ENCODE measurements at regions of chr10 and their contacts with region 1.

Region 1: DNA sequence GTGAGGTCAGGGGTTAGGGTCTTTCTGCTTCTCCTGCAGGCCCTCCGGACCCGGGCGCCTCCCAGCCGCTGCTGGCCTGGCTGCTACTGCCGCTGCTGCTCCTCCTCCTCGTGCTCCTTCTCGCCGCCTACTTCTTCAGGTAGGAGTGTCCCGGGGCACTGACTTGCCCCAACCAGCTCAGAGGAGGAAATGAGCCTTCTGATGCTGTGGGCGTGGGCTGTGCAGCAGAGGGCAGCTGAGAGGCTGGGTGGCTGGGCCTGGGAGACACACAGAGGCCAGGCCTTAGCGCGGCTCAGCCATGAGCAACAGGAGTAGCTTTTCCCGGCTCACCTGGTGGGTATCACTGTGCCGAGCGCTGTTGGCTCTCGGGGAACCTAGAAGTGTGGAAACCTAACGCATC is 78.9 kb downstream of the MKI67 start:
- DNase-seq: peak; percentile 89
- H3K4me3 Mint-ChIP-seq: peak overlapping the region; percentile 93
- H3K27ac Mint-ChIP-seq: peak overlapping the region; percentile 100
- H3K4me1 Mint-ChIP-seq: peaks cover 63% of the 10 kb centered on the region
- H3K27me3 Mint-ChIP-seq: no peaks in the 10 kb centered on the region

Region 2: DNA sequence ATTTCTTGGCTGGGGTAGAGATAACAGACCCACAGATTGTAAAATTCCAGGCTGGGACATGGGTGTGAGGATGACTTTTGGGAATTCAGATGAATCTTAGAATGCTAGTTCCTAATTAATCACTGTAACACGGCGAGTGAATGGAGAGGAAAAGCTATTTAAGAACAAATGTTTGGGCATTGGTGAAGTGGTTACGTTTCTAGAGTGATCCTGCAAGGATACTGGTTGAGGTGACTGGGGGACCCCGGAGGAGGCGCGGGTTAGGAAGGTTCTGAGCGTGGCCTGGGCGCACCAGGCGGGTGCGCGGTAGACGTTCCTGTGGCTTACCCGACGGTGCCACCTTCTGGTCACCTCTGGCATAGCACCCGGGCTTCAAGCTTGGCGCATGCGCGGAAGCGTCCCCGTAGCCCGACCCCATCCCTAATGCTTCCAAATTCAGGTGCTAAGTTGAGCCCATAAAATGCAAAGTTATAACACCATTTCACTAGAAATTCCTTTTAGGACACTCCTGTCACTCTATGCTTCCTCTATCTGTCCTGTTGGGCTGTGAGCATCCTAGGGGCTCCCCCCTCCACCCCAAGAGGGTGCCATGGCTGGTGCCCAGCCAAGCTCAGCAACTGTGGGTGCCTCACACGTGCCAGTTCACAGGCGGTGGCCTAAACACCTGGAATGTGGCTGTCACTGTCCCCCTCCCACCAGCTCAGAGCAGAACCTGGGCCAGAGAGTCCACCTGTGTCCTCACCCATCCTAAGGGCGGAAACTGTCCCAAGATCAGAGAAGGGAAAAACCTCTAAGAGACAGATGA is 36.0 kb before region 1 on chr10:
- CTCF ChIA-PET with region 1: interaction called, 14 read pairs
- POLR2A ChIA-PET with region 1: interaction called, 4 read pairs
- DNase-seq: peak; percentile 87
- H3K4me3 Mint-ChIP-seq: no peak overlapping the region
- H3K27ac Mint-ChIP-seq: no peak overlapping the region
- H3K4me1 Mint-ChIP-seq: peaks cover 12% of the 10 kb centered on the region
- H3K27me3 Mint-ChIP-seq: peaks cover 28% of the 10 kb centered on the region

Region 3: DNA sequence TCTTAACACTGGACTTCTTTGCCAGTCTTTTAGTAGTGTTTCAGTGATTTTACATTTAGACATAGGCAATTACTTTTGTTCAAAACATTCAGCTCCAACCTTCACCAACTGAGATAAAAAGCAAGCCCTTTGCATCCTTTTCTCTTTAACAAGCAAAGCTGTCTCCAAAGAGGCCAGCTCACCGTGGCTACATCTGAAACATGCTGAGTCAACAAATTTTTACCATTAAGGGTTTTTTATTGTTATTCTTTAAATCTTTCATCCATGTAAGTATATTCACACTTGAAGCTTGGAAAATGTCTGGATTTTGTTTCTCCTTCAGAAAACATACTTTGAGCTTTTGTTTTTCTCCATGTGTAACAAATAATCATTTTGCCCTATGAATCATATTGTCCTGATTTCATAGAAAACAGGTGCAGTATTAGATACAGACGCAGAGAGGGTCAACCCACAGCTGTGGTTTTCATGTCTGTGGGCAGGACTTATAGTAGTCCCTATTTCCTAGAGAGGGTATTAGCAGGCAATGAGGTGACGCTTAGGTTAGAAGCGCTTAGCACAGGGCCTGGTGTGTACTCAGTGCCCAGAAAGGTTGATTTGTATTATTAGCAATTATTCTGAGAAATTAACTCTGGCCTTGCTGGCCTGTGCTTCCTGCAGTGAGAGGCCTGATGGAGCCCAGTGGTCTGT is 20.6 kb before region 1 on chr10:
- CTCF ChIA-PET with region 1: interaction called, 7 read pairs
- POLR2A ChIA-PET with region 1: interaction called, 11 read pairs
- DNase-seq: peak; percentile 35
- H3K4me3 Mint-ChIP-seq: no peak overlapping the region
- H3K27ac Mint-ChIP-seq: no peak overlapping the region
- H3K4me1 Mint-ChIP-seq: peaks cover 19% of the 10 kb centered on the region
- H3K27me3 Mint-ChIP-seq: no peaks in the 10 kb centered on the region

Region 4: GRCh38 chr10:128035557-128035973 is 11.8 kb before region 1 on chr10:
- CTCF ChIA-PET with region 1: interaction called, 54 read pairs
- POLR2A ChIA-PET with region 1: interaction called, 16 read pairs
- DNase-seq: peak; percentile 71
- H3K4me3 Mint-ChIP-seq: no peak overlapping the region
- H3K27ac Mint-ChIP-seq: no peak overlapping the region
- H3K4me1 Mint-ChIP-seq: peaks cover 3% of the 10 kb centered on the region
- H3K27me3 Mint-ChIP-seq: peaks cover 2% of the 10 kb centered on the region

Region 5: GRCh38 chr10:128064108-128064969 is 17.0 kb after region 1 on chr10:
- CTCF ChIA-PET with region 1: interaction called, 36 read pairs
- POLR2A ChIA-PET with region 1: interaction called, 167 read pairs
- DNase-seq: peak; percentile 76
- H3K4me3 Mint-ChIP-seq: peak overlapping the region; percentile 51
- H3K27ac Mint-ChIP-seq: peak overlapping the region; percentile 76
- H3K4me1 Mint-ChIP-seq: peaks cover 66% of the 10 kb centered on the region
- H3K27me3 Mint-ChIP-seq: no peaks in the 10 kb centered on the region

Region 6: GRCh38 chr10:128069351-128070051 is 22.1 kb after region 1 on chr10:
- CTCF ChIA-PET with region 1: interaction called, 36 read pairs
- POLR2A ChIA-PET with region 1: interaction called, 167 read pairs
- DNase-seq: peak; percentile 82
- H3K4me3 Mint-ChIP-seq: no peak overlapping the region
- H3K27ac Mint-ChIP-seq: peak overlapping the region; percentile 17
- H3K4me1 Mint-ChIP-seq: peaks cover 61% of the 10 kb centered on the region
- H3K27me3 Mint-ChIP-seq: no peaks in the 10 kb centered on the region

Region 7: GRCh38 chr10:128095027-128095752 is 47.8 kb after region 1 on chr10:
- CTCF ChIA-PET with region 1: interaction called, 3 read pairs
- POLR2A ChIA-PET with region 1: interaction called, 15 read pairs
- DNase-seq: peak; percentile 65
- H3K4me3 Mint-ChIP-seq: peak overlapping the region; percentile 24
- H3K27ac Mint-ChIP-seq: peak overlapping the region; percentile 84
- H3K4me1 Mint-ChIP-seq: peaks cover 44% of the 10 kb centered on the region
- H3K27me3 Mint-ChIP-seq: no peaks in the 10 kb centered on the region